CD8-positive, alpha-beta memory T cell (primary cell): ENCODE measurements at regions of chr6 and their contacts with region 1.

Region 1: GRCh38 chr6:36027501-36028087 is at the start of gene MAPK14:
- DNase-seq: peak; percentile 98 to 99 (median 99)
- H3K4me3 ChIP-seq: peak within 1 kb of the TSS; percentile 92
- H3K4me3 Mint-ChIP-seq: peak within 1 kb of the TSS; percentile 88 to 95 (median 91)
- H3K27ac ChIP-seq: peak within 1 kb of the TSS; percentile 90
- H3K27ac Mint-ChIP-seq: peak within 1 kb of the TSS; percentile 83 to 95 (median 90)
- H3K4me1 ChIP-seq: peaks cover 23% of the 10 kb centered on the region
- H3K4me1 Mint-ChIP-seq: peaks cover 31 to 45% (median 40%) of the 10 kb centered on the region in 3 donors
- H3K27me3 ChIP-seq: no peaks in the 10 kb centered on the region
- H3K27me3 Mint-ChIP-seq: peaks cover 6 to 14% of the 10 kb centered on the region in 2 donors
- total RNA-seq, gene MAPK14: 46.5 to 48.4 TPM

Region 2: DNA sequence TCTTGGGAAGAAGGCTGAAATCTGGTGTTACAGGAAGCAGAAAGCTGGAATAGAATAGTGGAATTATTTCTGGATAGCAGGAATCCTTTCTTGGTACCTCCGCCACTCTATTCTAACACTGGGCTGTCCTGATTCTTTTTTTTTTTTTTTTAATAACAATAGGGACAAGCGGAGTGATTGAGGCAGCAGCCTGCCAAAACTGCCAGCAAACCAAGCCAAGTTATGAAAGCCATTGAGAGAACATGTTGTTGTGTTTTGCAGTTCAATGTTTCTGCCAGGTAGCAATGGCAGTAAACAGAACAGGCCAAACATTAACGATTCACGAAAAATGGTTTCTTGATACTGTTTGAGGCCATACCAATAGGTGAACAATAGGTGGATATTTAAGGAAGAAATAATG is 50.3 kb before region 1 on chr6:
- CTCF ChIA-PET with region 1: no interaction called
- POLR2A ChIA-PET with region 1: no interaction called
- DNase-seq: no peak
- H3K4me3 ChIP-seq: no peak overlapping the region
- H3K4me3 Mint-ChIP-seq: no peak overlapping the region
- H3K27ac ChIP-seq: no peak overlapping the region
- H3K27ac Mint-ChIP-seq: no peak overlapping the region
- H3K4me1 ChIP-seq: no peaks in the 10 kb centered on the region
- H3K4me1 Mint-ChIP-seq: no peaks in the 10 kb centered on the region
- H3K27me3 ChIP-seq: no peaks in the 10 kb centered on the region
- H3K27me3 Mint-ChIP-seq: peaks cover 3 to 15% of the 10 kb centered on the region in 2 donors

Region 3: GRCh38 chr6:36075656-36076055 is 48.1 kb after region 1 on chr6:
- CTCF ChIA-PET with region 1: interaction called, 10 read pairs
- POLR2A ChIA-PET with region 1: no interaction called
- DNase-seq: peak in 2 of 5 donors; percentile 5 to 47
- H3K4me3 ChIP-seq: no peak overlapping the region
- H3K4me3 Mint-ChIP-seq: no peak overlapping the region
- H3K27ac ChIP-seq: no peak overlapping the region
- H3K27ac Mint-ChIP-seq: peak overlapping the region in 4 of 8 donors; percentile 3 to 82 (median 24)
- H3K4me1 ChIP-seq: no peaks in the 10 kb centered on the region
- H3K4me1 Mint-ChIP-seq: peaks cover 26 to 44% (median 41%) of the 10 kb centered on the region in 3 donors
- H3K27me3 ChIP-seq: no peaks in the 10 kb centered on the region
- H3K27me3 Mint-ChIP-seq: no peaks in the 10 kb centered on the region

Region 4: DNA sequence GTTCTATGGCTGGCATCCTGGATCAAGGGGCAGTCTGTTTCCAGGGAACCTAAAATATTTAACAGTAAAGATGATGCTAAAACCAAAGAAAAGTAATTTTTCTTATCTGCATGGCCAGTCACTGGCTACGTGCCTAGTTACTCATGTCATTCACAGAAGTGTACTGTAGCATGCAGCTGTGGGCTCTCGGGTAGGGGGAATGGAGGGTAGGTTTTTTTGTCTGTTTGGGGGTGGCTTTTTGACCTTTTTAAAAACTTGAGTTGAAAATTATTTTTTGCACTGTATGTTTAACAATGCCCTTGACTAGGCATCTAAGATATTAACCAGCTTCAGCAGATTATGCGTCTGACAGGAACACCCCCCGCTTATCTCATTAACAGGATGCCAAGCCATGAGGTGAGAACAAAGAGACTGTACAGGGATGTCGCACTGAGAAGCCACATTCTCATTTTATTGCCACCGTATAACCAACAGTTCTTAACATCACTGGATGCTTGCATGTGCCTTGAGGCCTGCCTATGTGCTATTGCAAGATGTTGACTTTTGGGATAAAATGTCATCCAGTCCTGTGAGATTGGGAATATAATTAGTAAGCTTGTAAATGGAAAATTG is 72.4 kb after region 1 on chr6:
- CTCF ChIA-PET with region 1: interaction called, 81 read pairs
- POLR2A ChIA-PET with region 1: interaction called, 22 read pairs
- DNase-seq: peak in 4 of 5 donors; percentile 16 to 69 (median 66)
- H3K4me3 ChIP-seq: peak overlapping the region; percentile 12
- H3K4me3 Mint-ChIP-seq: peak overlapping the region; percentile 32 to 86 (median 76)
- H3K27ac ChIP-seq: no peak overlapping the region
- H3K27ac Mint-ChIP-seq: peak overlapping the region; percentile 65 to 96 (median 90)
- H3K4me1 ChIP-seq: peaks cover 40% of the 10 kb centered on the region
- H3K4me1 Mint-ChIP-seq: peaks cover 57 to 68% (median 63%) of the 10 kb centered on the region in 3 donors
- H3K27me3 ChIP-seq: no peaks in the 10 kb centered on the region
- H3K27me3 Mint-ChIP-seq: no peaks in the 10 kb centered on the region

Region 5: GRCh38 chr6:36131511-36132245 is 104.1 kb after region 1 on chr6:
- CTCF ChIA-PET with region 1: interaction called, 18 read pairs
- POLR2A ChIA-PET with region 1: interaction called, 14 read pairs
- DNase-seq: peak; percentile 34 to 63 (median 43)
- H3K4me3 ChIP-seq: peak overlapping the region; percentile 86
- H3K4me3 Mint-ChIP-seq: peak overlapping the region; percentile 88 to 96 (median 89)
- H3K27ac ChIP-seq: peak overlapping the region; percentile 49
- H3K27ac Mint-ChIP-seq: peak overlapping the region; percentile 90 to 96 (median 93)
- H3K4me1 ChIP-seq: peaks cover 40% of the 10 kb centered on the region
- H3K4me1 Mint-ChIP-seq: peaks cover 44 to 59% (median 57%) of the 10 kb centered on the region in 3 donors
- H3K27me3 ChIP-seq: no peaks in the 10 kb centered on the region
- H3K27me3 Mint-ChIP-seq: no peaks in the 10 kb centered on the region

Region 6: DNA sequence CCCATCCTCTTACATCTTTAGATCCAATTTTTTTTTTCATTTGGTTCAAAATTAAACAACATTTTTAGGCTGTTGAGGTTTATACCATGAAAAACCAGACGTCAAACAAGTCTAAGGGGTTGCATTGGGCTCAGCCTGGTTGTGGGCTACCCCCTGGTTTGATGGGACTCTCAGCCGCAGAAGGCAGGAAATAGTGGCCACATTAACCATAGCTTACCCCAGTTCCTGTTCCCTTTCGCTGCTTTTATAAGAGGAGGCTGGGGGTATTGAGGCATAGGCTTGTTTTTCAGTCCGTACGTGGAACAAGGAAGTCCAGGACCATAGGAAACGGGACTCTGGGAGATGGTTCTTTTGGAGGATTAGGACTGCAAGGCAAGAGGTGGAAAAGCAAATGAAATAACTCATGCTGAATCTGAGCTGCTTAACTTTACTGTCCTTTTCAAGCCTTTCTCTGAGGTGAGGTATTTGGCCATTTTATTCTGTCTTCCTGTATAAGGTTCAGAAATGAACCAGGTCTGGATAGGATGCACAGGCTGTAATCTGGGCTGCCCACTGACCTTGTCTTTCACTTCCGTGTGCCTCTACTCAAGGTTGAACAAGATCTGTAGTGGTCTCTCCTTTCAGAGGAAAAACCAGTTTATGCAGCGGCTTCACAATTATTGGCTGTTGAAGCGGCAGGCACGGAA is 176.6 kb after region 1 on chr6:
- CTCF ChIA-PET with region 1: interaction called, 10 read pairs
- POLR2A ChIA-PET with region 1: interaction called, 3 read pairs
- DNase-seq: peak; percentile 38 to 86 (median 78)
- H3K4me3 ChIP-seq: peak overlapping the region; percentile 41
- H3K4me3 Mint-ChIP-seq: peak overlapping the region; percentile 50 to 89 (median 80)
- H3K27ac ChIP-seq: no peak overlapping the region
- H3K27ac Mint-ChIP-seq: peak overlapping the region in 7 of 8 donors; percentile 40 to 89 (median 86)
- H3K4me1 ChIP-seq: peaks cover 49% of the 10 kb centered on the region
- H3K4me1 Mint-ChIP-seq: peaks cover 69 to 79% (median 72%) of the 10 kb centered on the region in 3 donors
- H3K27me3 ChIP-seq: no peaks in the 10 kb centered on the region
- H3K27me3 Mint-ChIP-seq: no peaks in the 10 kb centered on the region